ENCODE measurements at regions of chr9 and their contacts with region 1.

Region 1: DNA sequence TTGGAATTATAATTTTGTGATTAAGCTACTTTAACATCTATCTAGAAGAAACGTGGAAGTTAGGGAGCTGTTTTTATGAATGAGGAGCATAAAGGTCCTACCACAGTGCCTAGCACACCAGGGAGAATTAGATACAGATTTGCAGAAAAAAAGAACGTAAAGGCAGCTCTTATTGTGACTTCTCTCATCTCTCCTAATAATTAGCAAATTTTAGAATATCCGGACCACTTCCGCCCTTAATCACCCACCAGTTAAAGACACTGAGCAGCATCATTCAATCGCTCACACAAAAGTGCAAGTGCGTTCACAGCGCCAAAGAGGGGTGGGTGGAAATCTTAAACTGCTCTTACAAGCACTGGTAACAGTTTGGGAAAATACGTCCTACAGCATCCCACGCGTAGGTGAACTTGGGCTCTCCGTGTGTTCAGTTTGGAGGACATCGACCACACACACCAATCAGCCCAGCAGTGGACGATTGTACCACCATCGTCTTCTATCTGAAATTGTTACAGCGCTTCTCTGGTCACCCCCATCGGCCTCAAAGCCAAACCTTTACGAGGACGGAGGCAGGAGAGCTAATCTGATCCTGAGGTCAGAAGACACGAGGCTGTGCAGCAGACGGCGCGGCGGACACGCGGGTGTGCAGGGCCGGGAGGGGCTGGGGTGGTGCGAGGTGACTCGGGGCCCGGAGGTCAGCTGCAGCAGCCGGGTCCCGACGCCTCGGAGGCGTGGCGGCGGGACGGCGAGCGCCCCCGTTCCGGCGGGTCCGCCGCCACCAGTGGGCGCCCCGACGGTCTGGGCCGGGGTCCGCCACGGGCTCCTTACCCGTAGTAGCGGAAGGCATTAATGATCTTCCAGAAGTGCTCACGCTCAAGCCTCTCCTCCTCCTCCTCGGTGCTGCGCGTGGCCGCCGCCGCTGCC is 646 bp downstream of the CARNMT1 start:
- DNase-seq: peak; percentile 51 to 76
- H3K4me3 ChIP-seq: peak overlapping the region; percentile 82 to 90
- H3K27ac ChIP-seq: peak overlapping the region; percentile 81 to 92
- H3K4me1 ChIP-seq: peaks cover 0 to 12% (median 9%) of the 10 kb centered on the region in 4 donors
- H3K27me3 ChIP-seq: no peaks in the 10 kb centered on the region
- CTCF ChIP-seq: no peak

Region 2: GRCh38 chr9:73067074-73067473 is 1960.4 kb before region 1 on chr9:
- intact Hi-C with region 1: no loop called
- DNase-seq: no peak
- H3K4me3 ChIP-seq: no peak overlapping the region
- H3K27ac ChIP-seq: no peak overlapping the region
- H3K4me1 ChIP-seq: no peaks in the 10 kb centered on the region
- H3K27me3 ChIP-seq: no peaks in the 10 kb centered on the region
- CTCF ChIP-seq: no peak

Region 3: DNA sequence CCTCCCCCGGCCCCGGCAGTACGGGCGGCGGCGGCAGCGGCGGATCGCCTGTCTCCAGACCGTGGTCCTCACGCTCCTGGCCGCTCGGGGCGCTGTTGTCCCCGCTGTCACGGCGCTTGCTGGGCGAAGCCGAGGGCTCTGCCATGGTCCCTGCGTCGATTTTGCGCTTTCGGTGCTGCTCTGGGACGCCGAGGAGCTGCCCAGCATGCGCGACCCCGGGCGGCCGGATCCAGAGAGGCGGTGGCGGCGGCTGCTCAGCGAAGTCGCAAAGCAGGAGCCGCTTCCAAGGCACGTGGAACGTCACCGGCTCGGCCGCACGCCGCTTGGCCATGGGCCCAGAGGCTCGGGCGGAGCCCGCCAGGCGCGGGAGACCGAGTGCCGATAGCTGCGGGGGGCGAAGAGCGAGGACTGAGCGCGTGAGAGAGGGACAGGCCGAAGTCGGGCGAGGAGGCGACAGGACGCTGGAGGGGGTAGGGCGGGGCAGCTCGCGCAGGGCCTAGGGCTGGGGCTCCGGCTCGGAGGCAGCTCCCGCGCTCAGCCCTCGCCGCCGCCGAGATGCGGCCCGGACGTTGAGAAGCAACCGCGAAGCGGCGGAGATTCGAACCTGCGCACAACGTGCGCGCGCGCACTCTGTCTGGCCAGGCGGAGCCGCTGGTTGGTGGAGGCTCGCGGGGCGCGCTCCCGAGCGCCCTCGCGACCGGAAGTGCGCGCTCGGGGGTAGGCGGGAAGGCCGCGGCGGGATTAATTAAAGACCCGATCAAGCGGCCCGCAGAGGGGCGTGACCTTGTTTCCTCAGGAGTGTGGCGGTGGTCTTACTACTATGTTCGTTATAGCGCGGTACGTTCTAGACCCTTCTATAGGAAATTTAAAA is 74.9 kb before region 1 on chr9 and contains the start of gene C9orf40:
- intact Hi-C with region 1: loop called (anchors 5 kb)
- DNase-seq: peak; percentile 85 to 92
- H3K4me3 ChIP-seq: peak within 1 kb of the TSS; percentile 89 to 93
- H3K27ac ChIP-seq: peak within 1 kb of the TSS; percentile 98
- H3K4me1 ChIP-seq: peaks cover 0 to 7% (median 3%) of the 10 kb centered on the region in 4 donors
- H3K27me3 ChIP-seq: no peaks in the 10 kb centered on the region
- CTCF ChIP-seq: peak; percentile 78 to 83

Region 4: DNA sequence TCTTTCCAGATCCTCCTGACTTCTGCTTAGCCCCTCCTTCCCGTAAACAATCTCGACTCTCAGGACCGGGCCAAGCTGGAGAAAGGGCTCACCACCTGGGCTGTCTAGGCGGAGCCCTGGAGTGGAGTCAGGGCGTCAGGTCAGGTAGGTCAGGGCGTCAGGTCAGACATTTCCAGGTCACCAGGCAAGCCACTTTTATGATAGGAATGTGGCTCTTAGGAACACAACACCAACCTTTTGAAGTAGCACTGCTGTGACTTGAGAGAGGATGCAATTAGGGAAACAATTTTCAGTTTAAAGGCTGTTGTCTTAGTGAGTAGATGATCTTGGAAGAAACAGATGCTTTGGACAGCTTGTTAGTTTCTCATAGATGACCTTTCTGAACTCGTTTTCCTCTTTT is 73.6 kb after region 1 on chr9:
- intact Hi-C with region 1: no loop called
- DNase-seq: no peak
- H3K4me3 ChIP-seq: no peak overlapping the region
- H3K27ac ChIP-seq: no peak overlapping the region
- H3K4me1 ChIP-seq: peaks cover 0 to 8% (median 4%) of the 10 kb centered on the region in 4 donors
- H3K27me3 ChIP-seq: no peaks in the 10 kb centered on the region
- CTCF ChIP-seq: no peak